Gastrocnemius medialis (tissue), 4 donors: ENCODE measurements at regions of chr10 and their contacts with region 1.

Region 1: DNA sequence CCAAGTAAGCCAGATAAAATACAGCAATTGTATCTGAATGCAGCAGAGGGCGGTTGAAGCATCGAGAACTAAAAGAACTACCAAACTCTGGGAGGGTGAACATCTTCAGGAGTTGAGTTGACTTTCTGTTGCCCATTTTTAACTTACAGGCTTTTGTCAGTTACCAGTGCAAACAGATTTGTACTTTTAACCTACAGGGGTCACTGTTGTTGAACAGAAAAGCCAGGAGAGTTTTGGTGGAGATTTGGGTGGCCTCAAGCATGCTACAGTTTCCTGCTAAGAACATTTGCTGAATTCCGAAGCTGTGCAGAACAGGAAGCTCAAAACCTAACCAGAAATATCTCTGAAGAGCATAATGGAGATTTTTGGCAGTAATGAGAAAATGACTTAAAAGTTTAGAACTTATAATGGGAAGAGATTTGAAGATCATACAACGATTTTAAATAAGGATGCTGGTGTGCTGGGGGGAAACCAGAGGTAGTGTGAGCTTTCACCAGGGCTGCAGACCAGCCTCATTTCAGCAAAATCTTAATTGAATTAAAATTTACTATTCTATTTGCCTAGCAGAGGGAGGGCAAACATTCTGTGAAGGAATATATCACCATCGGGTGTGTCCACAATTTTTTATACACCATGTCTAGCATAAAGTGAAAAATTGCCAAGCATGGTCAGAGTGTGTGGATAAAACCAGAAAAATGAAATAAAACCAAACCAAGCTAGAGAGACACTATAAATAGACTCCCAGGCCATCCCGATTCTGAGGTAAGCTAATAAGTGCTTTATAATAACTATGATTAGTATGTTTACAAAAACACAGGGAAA is 208.6 kb upstream of the CCDC6 start:
- DNase-seq: no peak
- ATAC-seq: peak; percentile 69 to 92
- H3K4me3 ChIP-seq: no peak overlapping the region
- H3K27ac ChIP-seq: no peak overlapping the region
- H3K4me1 ChIP-seq: peaks cover 0 to 7% of the 10 kb centered on the region in 2 donors
- H3K27me3 ChIP-seq: no peaks in the 10 kb centered on the region
- CTCF ChIP-seq: peak; percentile 45 to 68 (median 57)
- POLR2A ChIP-seq: no peak

Region 2: DNA sequence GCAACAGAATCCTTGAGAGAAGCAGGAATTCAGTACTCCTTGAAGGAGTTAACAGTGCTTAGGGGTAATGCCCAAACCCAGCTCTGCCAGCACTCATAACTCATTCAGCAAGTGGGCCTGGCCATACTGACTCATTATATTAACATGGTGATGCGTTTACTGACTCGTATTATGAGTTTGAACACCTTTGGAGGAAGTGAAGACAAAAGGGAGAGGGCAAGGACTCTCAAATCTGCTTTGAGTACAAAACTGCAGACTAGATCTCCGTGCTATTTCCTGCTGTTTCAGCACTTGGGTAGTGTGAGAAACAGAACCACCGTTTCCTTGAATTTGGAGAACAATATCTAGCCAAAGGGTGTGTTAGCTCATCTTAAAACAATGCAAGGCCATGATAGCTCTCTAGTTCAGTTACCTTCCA is 436.1 kb before region 1 on chr10:
- in situ Hi-C with region 1: no loop called
- intact Hi-C with region 1: no loop called
- DNase-seq: no peak
- ATAC-seq: no peak
- H3K4me3 ChIP-seq: no peak overlapping the region
- H3K27ac ChIP-seq: no peak overlapping the region
- H3K4me1 ChIP-seq: peaks cover 0 to 15% of the 10 kb centered on the region in 2 donors
- H3K27me3 ChIP-seq: no peaks in the 10 kb centered on the region
- CTCF ChIP-seq: no peak
- POLR2A ChIP-seq: no peak

Region 3: GRCh38 chr10:60073781-60074656 is 41.0 kb before region 1 on chr10:
- in situ Hi-C with region 1: no loop called
- intact Hi-C with region 1: loop called (anchors 1 kb)
- DNase-seq: no peak
- ATAC-seq: no peak
- H3K4me3 ChIP-seq: no peak overlapping the region
- H3K27ac ChIP-seq: no peak overlapping the region
- H3K4me1 ChIP-seq: no peaks in the 10 kb centered on the region
- H3K27me3 ChIP-seq: no peaks in the 10 kb centered on the region
- CTCF ChIP-seq: no peak
- POLR2A ChIP-seq: no peak

Region 4: GRCh38 chr10:60148264-60148840 is 33.4 kb after region 1 on chr10:
- in situ Hi-C with region 1: no loop called
- intact Hi-C with region 1: loop called (anchors 2 kb)
- DNase-seq: peak in 1 of 2 donors; percentile 13
- ATAC-seq: peak; percentile 80 to 84
- H3K4me3 ChIP-seq: no peak overlapping the region
- H3K27ac ChIP-seq: peak overlapping the region; percentile 16 to 51 (median 40)
- H3K4me1 ChIP-seq: peaks cover 12 to 17% of the 10 kb centered on the region in 2 donors
- H3K27me3 ChIP-seq: no peaks in the 10 kb centered on the region
- CTCF ChIP-seq: no peak
- POLR2A ChIP-seq: no peak

Region 5: GRCh38 chr10:60186315-60187071 is 71.5 kb after region 1 on chr10:
- in situ Hi-C with region 1: no loop called
- intact Hi-C with region 1: loop called (anchors 5 kb)
- DNase-seq: peak; percentile 18 to 37
- ATAC-seq: peak; percentile 75 to 79
- H3K4me3 ChIP-seq: peak overlapping the region in 3 of 4 donors; percentile 0 to 27 (median 1)
- H3K27ac ChIP-seq: peak overlapping the region in 3 of 4 donors; percentile 44 to 54 (median 46)
- H3K4me1 ChIP-seq: peaks cover 27 to 32% of the 10 kb centered on the region in 2 donors
- H3K27me3 ChIP-seq: no peaks in the 10 kb centered on the region
- CTCF ChIP-seq: no peak
- POLR2A ChIP-seq: no peak

Region 6: DNA sequence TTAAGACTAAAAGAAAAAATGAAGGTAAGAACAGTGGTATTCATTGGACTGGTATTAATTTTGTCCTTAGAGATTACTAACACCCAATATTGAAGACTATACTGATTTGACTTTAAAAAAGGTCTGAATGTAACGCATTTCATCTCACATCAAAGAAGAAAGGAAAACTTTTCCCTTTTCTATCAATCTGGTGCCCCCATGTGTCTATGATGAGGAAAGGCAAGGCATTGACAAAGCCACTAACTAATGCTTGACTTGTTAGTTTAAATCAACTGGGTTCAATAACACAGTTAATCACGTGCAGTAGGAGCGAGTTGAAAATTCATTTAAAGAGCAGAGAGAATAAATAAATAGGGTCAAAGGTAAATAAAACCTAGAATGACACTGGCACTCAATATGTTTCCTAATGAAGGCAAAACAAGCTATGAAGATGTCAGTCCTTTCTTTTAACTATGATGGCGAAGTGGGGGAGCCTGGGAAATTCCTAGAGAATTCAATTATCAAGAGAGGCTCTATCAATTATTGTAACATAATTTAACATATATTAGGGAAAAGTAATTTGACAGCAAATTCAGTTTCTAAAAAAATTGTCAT is 93.8 kb after region 1 on chr10:
- in situ Hi-C with region 1: loop called in 1 of 4 experiments (anchors 5 kb)
- intact Hi-C with region 1: loop called (anchors 1 kb)
- DNase-seq: no peak
- ATAC-seq: peak; percentile 57 to 63
- H3K4me3 ChIP-seq: no peak overlapping the region
- H3K27ac ChIP-seq: no peak overlapping the region
- H3K4me1 ChIP-seq: peaks cover 4% of the 10 kb centered on the region in 2 donors
- H3K27me3 ChIP-seq: no peaks in the 10 kb centered on the region
- CTCF ChIP-seq: peak; percentile 53 to 88 (median 71)
- POLR2A ChIP-seq: no peak

Region 7: GRCh38 chr10:60237977-60238758 is 123.2 kb after region 1 on chr10:
- in situ Hi-C with region 1: no loop called
- intact Hi-C with region 1: no loop called
- DNase-seq: no peak
- ATAC-seq: peak in 1 of 2 donors; percentile 36
- H3K4me3 ChIP-seq: no peak overlapping the region
- H3K27ac ChIP-seq: no peak overlapping the region
- H3K4me1 ChIP-seq: no peaks in the 10 kb centered on the region
- H3K27me3 ChIP-seq: no peaks in the 10 kb centered on the region
- CTCF ChIP-seq: no peak
- POLR2A ChIP-seq: no peak